ENCODE measurements at regions of chr21 and their contacts with region 1.

Region 1: DNA sequence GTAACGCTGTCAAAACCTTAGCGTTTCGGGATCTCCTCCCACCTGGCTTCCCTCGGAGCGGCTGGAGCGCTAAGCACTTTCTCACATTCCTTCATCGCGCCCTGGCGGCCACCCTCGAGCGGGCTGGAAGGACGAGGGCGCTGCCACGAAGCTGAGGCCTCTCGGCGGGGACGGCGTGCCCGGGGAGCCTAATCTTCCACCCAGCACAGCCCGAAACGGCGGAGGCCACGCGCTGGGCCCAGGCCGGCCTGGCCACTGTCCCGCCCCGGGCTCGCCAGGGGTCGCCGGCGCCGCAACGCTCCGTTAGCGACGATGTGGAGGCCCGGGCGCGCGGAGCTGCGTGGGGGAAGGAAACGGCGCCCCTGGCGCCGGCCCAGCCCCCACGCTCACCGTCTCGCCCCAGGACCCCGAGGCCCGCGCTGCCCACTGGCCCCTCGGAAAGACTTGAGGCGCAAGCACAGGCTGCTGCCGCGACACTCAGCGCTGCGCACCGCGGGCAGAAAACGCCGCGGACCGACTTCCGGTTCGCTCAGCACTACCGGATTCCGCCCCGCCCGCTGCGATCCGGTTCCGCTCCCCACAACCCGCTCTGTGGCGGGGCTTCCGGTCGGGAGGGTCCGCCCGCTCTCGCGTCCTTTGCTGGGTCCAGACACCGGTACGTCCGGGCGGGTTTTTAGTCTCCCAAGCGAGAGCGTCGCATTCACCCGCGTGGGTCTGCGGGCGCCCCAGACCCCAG is at the start of gene YBEY:
- DNase-seq: peak; percentile 86 to 93 (median 87)
- H3K4me3 ChIP-seq: peak within 1 kb of the TSS; percentile 93
- H3K27ac ChIP-seq: peak within 1 kb of the TSS; percentile 76 to 93
- H3K4me1 ChIP-seq: peaks cover 17% of the 10 kb centered on the region
- H3K27me3 ChIP-seq: no peaks in the 10 kb centered on the region
- CTCF ChIP-seq: peak in 2 of 3 donors; percentile 27 to 54
- EP300 ChIP-seq: no peak
- POLR2A ChIP-seq: peak; percentile 66
- total RNA-seq, gene YBEY: 10.7 to 22.6 (median 14.9) TPM

Region 2: DNA sequence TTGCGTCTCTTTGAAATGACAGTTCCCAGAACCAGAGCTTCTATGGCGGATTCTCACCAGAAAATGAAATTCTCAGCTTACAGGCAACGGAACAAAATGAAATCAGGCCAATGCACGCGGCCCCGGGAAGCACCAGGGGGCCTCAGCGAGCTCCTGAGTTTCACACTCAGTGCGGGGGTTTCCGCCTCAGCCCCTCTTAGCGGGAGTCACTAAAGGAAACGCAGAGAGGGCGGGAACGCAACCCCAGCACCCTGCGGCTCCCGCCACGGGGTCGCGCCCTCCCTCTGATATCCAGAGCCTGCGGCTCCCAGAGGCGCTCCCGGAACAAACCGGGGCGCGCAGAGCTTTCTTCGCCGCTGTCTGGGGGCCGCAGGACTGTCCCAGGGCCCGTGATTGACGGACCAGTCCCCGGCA is 312.3 kb before region 1 on chr21:
- intact Hi-C with region 1: no loop called
- DNase-seq: peak; percentile 87 to 93 (median 90)
- H3K4me3 ChIP-seq: peak overlapping the region; percentile 59
- H3K27ac ChIP-seq: peak overlapping the region; percentile 86 to 94
- H3K4me1 ChIP-seq: peaks cover 37% of the 10 kb centered on the region
- H3K27me3 ChIP-seq: no peaks in the 10 kb centered on the region
- CTCF ChIP-seq: peak; percentile 64 to 83 (median 71)
- EP300 ChIP-seq: no peak
- POLR2A ChIP-seq: peak; percentile 43

Region 3: GRCh38 chr21:46153247-46154150 is 132.4 kb before region 1 on chr21:
- intact Hi-C with region 1: loop called in 2 of 4 experiments (anchors 5 kb)
- DNase-seq: peak; percentile 72 to 85 (median 80)
- H3K4me3 ChIP-seq: no peak overlapping the region
- H3K27ac ChIP-seq: peak overlapping the region; percentile 26 to 55
- H3K4me1 ChIP-seq: peaks cover 9% of the 10 kb centered on the region
- H3K27me3 ChIP-seq: no peaks in the 10 kb centered on the region
- CTCF ChIP-seq: peak; percentile 55 to 77 (median 62)
- EP300 ChIP-seq: no peak
- POLR2A ChIP-seq: no peak

Region 4: GRCh38 chr21:46202556-46203202 is 83.2 kb before region 1 on chr21:
- intact Hi-C with region 1: no loop called
- DNase-seq: no peak
- H3K4me3 ChIP-seq: no peak overlapping the region
- H3K27ac ChIP-seq: no peak overlapping the region
- H3K4me1 ChIP-seq: no peaks in the 10 kb centered on the region
- H3K27me3 ChIP-seq: no peaks in the 10 kb centered on the region
- CTCF ChIP-seq: no peak
- EP300 ChIP-seq: no peak
- POLR2A ChIP-seq: no peak

Region 5: GRCh38 chr21:46228345-46229051 is 57.4 kb before region 1 on chr21 and contains the start of gene LSS:
- intact Hi-C with region 1: loop called in 1 of 4 experiments (anchors 10 kb)
- DNase-seq: peak; percentile 96 to 99 (median 98)
- H3K4me3 ChIP-seq: peak within 1 kb of the TSS; percentile 67
- H3K27ac ChIP-seq: peak within 1 kb of the TSS; percentile 77 to 81
- H3K4me1 ChIP-seq: peaks cover 13% of the 10 kb centered on the region
- H3K27me3 ChIP-seq: no peaks in the 10 kb centered on the region
- CTCF ChIP-seq: peak in 1 of 3 donors; percentile 15
- EP300 ChIP-seq: no peak
- POLR2A ChIP-seq: no peak
- total RNA-seq, gene LSS: 33.2 to 201 (median 80.9) TPM

Measured in ovary (tissue), 10 donors.